MCF 10A (cell line): ENCODE measurements at regions of chr4 and their contacts with region 1.

Region 1: DNA sequence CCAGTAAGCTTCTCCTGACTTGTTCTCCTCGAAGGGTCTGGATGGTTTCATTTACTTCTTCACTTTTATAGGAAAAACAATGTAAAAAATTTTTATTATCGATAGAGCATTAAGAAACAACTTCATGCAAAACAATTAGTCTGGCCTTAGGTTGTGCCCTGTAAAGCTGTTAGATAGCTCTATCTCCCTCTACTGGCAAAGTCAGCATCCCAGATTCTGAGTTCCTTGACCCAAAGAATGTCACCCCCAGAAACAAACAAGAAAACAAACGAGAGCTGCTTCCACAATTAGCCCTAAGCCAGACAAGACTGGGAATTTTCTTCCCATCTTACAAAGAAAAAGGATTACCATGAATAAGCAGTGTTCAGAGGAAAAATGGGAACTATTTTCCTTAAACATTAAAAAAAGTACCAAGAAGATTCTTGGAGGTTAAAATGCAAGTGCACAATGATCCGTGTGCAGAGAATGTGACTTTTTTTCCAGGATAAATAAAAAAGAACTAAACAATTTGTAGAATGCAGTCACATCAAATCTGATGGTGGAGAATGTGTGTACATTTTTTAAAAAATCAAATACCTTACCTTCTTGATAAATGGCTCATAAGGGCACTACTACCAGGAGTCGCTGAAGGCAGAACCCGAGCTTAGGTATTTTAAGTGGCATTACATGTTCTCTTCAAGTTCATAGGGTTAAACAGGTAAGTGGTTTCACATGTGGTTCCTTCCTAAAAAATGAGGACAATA is 293.2 kb downstream of the FBXO8 start:
- DNase-seq: peak; percentile 42
- H3K4me3 Mint-ChIP-seq: no peak overlapping the region
- H3K27ac Mint-ChIP-seq: no peak overlapping the region
- H3K4me1 Mint-ChIP-seq: no peaks in the 10 kb centered on the region
- H3K27me3 Mint-ChIP-seq: peaks cover 96% of the 10 kb centered on the region
- CTCF ChIP-seq: peak; percentile 61

Region 2: DNA sequence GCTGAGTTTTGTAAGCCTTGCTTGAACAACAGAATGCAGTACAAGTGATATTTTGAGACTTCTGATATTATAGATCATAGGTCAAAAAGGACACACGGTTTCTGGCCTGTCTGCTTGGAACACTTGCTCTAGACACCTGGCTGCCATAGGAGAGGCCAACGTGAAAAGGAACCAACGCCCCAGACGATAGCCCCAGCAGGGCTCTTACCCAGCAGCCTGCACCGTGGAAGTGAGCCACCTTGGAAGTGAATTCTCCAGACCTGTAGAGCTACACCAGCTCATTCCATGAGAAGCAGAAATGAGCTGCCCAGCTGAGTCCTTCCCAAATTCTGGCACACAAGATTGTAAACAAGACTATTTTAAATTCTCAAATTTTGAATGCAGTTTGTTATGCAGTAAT is 29.9 kb before region 1 on chr4:
- CTCF ChIA-PET with region 1: no interaction called
- POLR2A ChIA-PET with region 1: no interaction called
- intact Hi-C with region 1: no loop called
- DNase-seq: no peak
- H3K4me3 Mint-ChIP-seq: no peak overlapping the region
- H3K27ac Mint-ChIP-seq: no peak overlapping the region
- H3K4me1 Mint-ChIP-seq: no peaks in the 10 kb centered on the region
- H3K27me3 Mint-ChIP-seq: peaks cover 49% of the 10 kb centered on the region
- CTCF ChIP-seq: no peak

Region 3: GRCh38 chr4:174005422-174005821 is 15.1 kb after region 1 on chr4:
- CTCF ChIA-PET with region 1: interaction called, 14 read pairs
- POLR2A ChIA-PET with region 1: no interaction called
- intact Hi-C with region 1: no loop called
- DNase-seq: no peak
- H3K4me3 Mint-ChIP-seq: no peak overlapping the region
- H3K27ac Mint-ChIP-seq: no peak overlapping the region
- H3K4me1 Mint-ChIP-seq: no peaks in the 10 kb centered on the region
- H3K27me3 Mint-ChIP-seq: peaks cover 91% of the 10 kb centered on the region
- CTCF ChIP-seq: no peak

Region 4: DNA sequence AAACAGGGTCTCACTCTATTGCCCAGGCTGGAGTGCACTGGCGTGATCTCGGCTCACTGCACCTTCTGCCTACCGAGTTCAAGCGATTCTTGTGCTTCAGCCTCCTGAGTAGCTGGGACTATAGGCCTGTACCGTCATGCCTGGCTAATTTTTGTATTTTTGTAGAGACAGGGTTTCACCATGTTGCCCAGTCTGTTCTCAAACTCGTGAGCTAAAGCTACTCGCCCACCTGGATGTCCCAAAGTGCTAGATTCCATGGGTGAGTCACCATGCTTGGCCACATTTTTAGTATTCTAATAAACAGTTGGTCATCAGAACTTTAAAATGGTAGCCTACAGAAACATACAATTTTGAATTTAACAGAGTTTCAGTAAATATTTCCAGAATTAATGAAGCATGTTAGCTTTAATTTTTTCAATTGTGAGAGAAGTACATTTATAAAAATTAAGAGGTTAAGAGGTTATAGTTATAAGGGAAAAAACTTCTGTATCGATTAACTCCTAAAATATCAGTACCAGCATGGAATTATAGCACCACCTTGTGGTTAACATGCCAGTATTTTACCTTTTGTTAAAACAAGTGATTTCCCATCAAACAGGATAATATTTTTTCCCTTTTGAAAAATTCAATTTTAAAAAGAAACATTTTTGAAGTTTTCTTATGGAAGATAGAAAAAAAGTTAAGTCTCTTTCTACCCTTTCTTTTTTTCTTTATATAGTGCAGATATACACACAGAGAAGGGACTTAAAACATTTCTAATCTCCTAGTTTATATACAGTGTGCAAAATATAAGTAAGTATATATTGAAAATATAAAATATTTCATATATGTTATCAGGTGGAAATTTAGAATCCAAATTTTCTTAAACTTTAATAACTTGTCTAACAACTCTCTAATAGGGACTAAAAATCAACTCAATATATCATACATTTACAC is 328.8 kb after region 1 on chr4:
- CTCF ChIA-PET with region 1: no interaction called
- POLR2A ChIA-PET with region 1: no interaction called
- intact Hi-C with region 1: loop called (anchors 2 kb)
- DNase-seq: peak; percentile 48
- H3K4me3 Mint-ChIP-seq: no peak overlapping the region
- H3K27ac Mint-ChIP-seq: no peak overlapping the region
- H3K4me1 Mint-ChIP-seq: peaks cover 8% of the 10 kb centered on the region
- H3K27me3 Mint-ChIP-seq: no peaks in the 10 kb centered on the region
- CTCF ChIP-seq: peak; percentile 52

Region 5: GRCh38 chr4:174604198-174604597 is 613.9 kb after region 1 on chr4:
- CTCF ChIA-PET with region 1: no interaction called
- POLR2A ChIA-PET with region 1: no interaction called
- intact Hi-C with region 1: no loop called
- DNase-seq: peak; percentile 53
- H3K4me3 Mint-ChIP-seq: no peak overlapping the region
- H3K27ac Mint-ChIP-seq: no peak overlapping the region
- H3K4me1 Mint-ChIP-seq: no peaks in the 10 kb centered on the region
- H3K27me3 Mint-ChIP-seq: no peaks in the 10 kb centered on the region
- CTCF ChIP-seq: no peak